Activated CD4-positive, alpha-beta memory T cell treated with anti-CD3 and anti-CD28 coated beads for 36 hours (primary cell): ENCODE measurements at regions of chr16 and their contacts with region 1.

Region 1: GRCh38 chr16:22098405-22099255 is 6.3 kb downstream of the VWA3A start:
- DNase-seq: no peak
- H3K4me3 Mint-ChIP-seq: no peak overlapping the region
- H3K27ac Mint-ChIP-seq: no peak overlapping the region
- H3K4me1 Mint-ChIP-seq: no peaks in the 10 kb centered on the region
- H3K27me3 Mint-ChIP-seq: peaks cover 15% of the 10 kb centered on the region

Region 2: DNA sequence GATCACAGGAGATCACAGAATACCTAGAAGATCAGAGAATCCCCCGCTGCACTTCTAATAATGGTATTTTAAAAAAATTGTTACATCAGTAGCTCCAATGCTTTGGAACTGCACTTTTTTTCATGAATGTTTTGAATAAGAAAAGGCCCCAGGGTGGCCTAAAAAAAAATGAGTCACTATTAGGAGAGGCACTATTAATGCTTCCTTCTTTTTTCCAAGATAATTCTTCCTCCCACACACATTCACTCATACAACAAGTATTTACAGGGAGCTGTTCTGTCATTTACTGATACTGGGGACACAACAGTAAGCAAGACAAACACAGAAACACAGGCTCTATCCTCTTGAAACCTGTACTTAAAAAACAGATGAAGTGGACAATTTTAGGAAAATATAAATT is 97.0 kb before region 1 on chr16:
- CTCF ChIA-PET with region 1: interaction called, 45 read pairs
- POLR2A ChIA-PET with region 1: no interaction called
- intact Hi-C with region 1: loop called (anchors 1 kb)
- DNase-seq: no peak
- H3K4me3 Mint-ChIP-seq: no peak overlapping the region
- H3K27ac Mint-ChIP-seq: no peak overlapping the region
- H3K4me1 Mint-ChIP-seq: peaks cover 10% of the 10 kb centered on the region
- H3K27me3 Mint-ChIP-seq: no peaks in the 10 kb centered on the region

Region 3: GRCh38 chr16:22007509-22008214 is 91.0 kb before region 1 on chr16 and contains the start of gene MOSMO:
- CTCF ChIA-PET with region 1: interaction called, 45 read pairs
- POLR2A ChIA-PET with region 1: no interaction called
- intact Hi-C with region 1: no loop called
- DNase-seq: peak; percentile 74
- H3K4me3 Mint-ChIP-seq: peak within 1 kb of the TSS; percentile 84
- H3K27ac Mint-ChIP-seq: peak within 1 kb of the TSS; percentile 46
- H3K4me1 Mint-ChIP-seq: peaks cover 41% of the 10 kb centered on the region
- H3K27me3 Mint-ChIP-seq: no peaks in the 10 kb centered on the region
- total RNA-seq, gene MOSMO: 8.1 to 9.6 TPM

Region 4: GRCh38 chr16:22109258-22109898 is 10.7 kb after region 1 on chr16:
- CTCF ChIA-PET with region 1: interaction called, 15 read pairs
- POLR2A ChIA-PET with region 1: no interaction called
- intact Hi-C with region 1: no loop called
- DNase-seq: no peak
- H3K4me3 Mint-ChIP-seq: no peak overlapping the region
- H3K27ac Mint-ChIP-seq: no peak overlapping the region
- H3K4me1 Mint-ChIP-seq: no peaks in the 10 kb centered on the region
- H3K27me3 Mint-ChIP-seq: peaks cover 2% of the 10 kb centered on the region

Region 5: GRCh38 chr16:22216191-22216831 is 117.7 kb after region 1 on chr16:
- CTCF ChIA-PET with region 1: no interaction called
- POLR2A ChIA-PET with region 1: no interaction called
- intact Hi-C with region 1: no loop called
- DNase-seq: no peak
- H3K4me3 Mint-ChIP-seq: no peak overlapping the region
- H3K27ac Mint-ChIP-seq: no peak overlapping the region
- H3K4me1 Mint-ChIP-seq: peaks cover 24% of the 10 kb centered on the region
- H3K27me3 Mint-ChIP-seq: no peaks in the 10 kb centered on the region